PC-9 (cell line): ENCODE measurements at regions of chr3 and their contacts with region 1.

Region 1: GRCh38 chr3:65767551-65767950 is 271.2 kb downstream of the MAGI1 start:
- DNase-seq: no peak
- H3K4me3 ChIP-seq: no peak overlapping the region
- H3K27ac ChIP-seq: no peak overlapping the region
- H3K4me1 ChIP-seq: no peaks in the 10 kb centered on the region
- H3K27me3 ChIP-seq: no peaks in the 10 kb centered on the region
- CTCF ChIP-seq: no peak

Region 2: DNA sequence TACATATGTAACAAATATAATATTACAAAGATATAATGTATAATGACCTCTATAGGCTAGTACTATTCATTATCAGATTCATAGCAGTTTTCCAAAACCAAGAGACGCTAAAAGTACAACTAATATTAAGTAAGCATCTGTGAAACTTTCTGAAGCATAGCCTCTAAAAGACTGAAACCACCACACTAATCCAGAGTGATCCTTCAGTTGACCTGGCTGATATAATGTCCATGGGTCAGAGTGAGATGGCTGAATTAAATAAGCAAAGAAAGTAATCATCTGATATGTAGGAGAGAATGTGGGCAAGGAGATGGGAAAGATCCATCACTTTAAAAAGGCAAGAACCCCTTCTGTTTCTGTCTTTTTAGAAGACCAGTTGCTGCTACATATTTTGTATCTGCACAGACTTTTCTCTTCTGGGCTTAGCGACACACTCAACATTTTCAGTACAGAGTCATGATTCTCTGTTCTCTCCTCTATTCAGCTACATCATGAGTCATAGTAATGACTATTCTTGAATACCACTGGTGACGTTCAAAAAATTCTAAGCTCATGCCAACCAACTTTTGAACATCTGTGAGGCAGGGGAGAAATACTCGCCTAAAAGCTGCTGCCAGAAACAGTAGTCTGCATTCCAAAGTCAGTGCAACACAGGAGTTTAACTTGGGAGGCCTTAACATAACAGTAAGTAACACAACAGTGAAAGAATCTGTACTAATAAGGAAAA is 121.6 kb after region 1 on chr3:
- CTCF ChIA-PET with region 1: no interaction called
- POLR2A ChIA-PET with region 1: no interaction called
- intact Hi-C with region 1: no loop called
- DNase-seq: peak; percentile 10 to 54
- H3K4me3 ChIP-seq: no peak overlapping the region
- H3K27ac ChIP-seq: no peak overlapping the region
- H3K4me1 ChIP-seq: peaks cover under 1% of the 10 kb centered on the region
- H3K27me3 ChIP-seq: no peaks in the 10 kb centered on the region
- CTCF ChIP-seq: no peak

Region 3: GRCh38 chr3:65899226-65899625 is 131.7 kb after region 1 on chr3:
- CTCF ChIA-PET with region 1: no interaction called
- POLR2A ChIA-PET with region 1: interaction called, 10 read pairs
- intact Hi-C with region 1: no loop called
- DNase-seq: no peak
- H3K4me3 ChIP-seq: no peak overlapping the region
- H3K27ac ChIP-seq: no peak overlapping the region
- H3K4me1 ChIP-seq: 0 out of 2 replicates have a peak, but pooled peaks cover 6% of the 10 kb centered on the region
- H3K27me3 ChIP-seq: no peaks in the 10 kb centered on the region
- CTCF ChIP-seq: no peak